A673 (cell line): ENCODE measurements at regions of chr2 and their contacts with region 1.

Region 1: DNA sequence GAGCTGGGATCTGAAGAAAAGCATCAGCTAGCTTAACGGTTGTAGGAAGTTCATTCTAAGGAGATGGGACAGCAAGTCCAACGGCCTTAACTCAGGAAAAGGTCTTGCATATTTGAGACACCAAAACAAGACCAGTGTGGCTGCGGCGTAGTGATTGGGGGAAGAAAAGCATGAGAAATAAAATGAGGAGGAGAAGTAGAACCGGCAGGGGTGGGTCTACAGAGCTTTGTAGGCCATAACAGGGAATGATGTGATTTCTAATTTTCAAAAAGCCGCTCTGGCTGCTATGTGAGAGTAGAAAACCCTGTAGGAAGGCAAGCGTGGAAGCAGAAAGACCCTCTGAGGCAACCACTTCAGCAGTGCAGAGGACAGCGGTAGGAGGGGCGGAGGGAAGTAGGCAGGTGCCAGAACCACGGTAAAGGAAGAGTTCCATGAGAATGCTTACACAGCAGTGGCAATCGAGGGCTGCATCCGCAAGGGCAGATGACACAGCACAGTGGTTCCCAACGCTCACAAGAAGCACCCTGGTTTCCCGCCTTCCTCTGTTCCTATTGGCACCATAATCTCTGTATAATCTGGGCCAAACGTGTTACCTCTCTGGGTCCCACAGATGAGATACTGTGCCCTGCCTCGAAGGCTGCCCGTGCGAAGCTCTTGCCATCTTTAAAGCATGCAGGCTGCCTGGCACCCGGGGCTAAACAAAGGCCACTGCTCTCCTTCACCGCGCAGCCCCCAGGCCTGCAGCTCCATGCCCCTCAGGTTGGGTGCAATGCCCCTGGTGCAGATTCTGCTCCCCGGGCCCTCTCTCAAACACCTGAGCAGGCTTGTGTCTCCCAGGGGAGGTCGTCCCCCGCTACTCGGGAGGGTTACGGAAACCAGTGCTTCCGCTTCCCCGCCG is 791 bp downstream of the ANKRD39 start:
- DNase-seq: peak; percentile 30
- H3K4me3 ChIP-seq: peak overlapping the region; percentile 66
- H3K27ac ChIP-seq: peak overlapping the region; percentile 78
- H3K4me1 ChIP-seq: peaks cover 10% of the 10 kb centered on the region
- H3K27me3 ChIP-seq: no peaks in the 10 kb centered on the region
- CTCF ChIP-seq: no peak

Region 2: DNA sequence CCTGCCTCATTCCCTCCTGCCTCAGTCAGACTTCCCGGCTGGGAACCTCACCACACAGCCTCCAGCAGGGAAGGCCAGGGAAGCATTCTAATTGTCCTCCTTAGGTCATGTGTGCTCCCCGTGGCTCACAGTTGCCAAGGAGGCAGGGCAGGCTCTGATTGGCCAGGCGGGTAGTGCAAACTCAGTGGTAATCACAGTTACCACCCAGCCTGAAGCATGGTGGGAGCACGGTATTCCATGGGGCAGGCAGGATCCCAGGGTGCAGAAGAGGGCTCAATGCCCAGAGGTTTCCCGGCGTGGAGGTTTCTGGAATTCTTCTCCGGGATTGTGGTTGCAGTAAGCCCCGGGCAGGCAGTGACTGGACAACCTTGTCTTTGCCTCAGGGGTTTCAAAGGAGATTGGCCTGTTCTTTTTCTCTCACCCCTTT is 187.3 kb before region 1 on chr2:
- CTCF ChIA-PET with region 1: interaction called, 18 read pairs
- POLR2A ChIA-PET with region 1: no interaction called
- intact Hi-C with region 1: no loop called
- DNase-seq: no peak
- H3K4me3 ChIP-seq: no peak overlapping the region
- H3K27ac ChIP-seq: no peak overlapping the region
- H3K4me1 ChIP-seq: peaks cover 19% of the 10 kb centered on the region
- H3K27me3 ChIP-seq: no peaks in the 10 kb centered on the region
- CTCF ChIP-seq: no peak

Region 3: GRCh38 chr2:96868555-96869280 is 11.7 kb after region 1 on chr2:
- CTCF ChIA-PET with region 1: interaction called, 24 read pairs
- POLR2A ChIA-PET with region 1: interaction called, 3 read pairs
- intact Hi-C with region 1: no loop called
- DNase-seq: peak; percentile 95
- H3K4me3 ChIP-seq: peak overlapping the region; percentile 97
- H3K27ac ChIP-seq: peak overlapping the region; percentile 99
- H3K4me1 ChIP-seq: peaks cover 19% of the 10 kb centered on the region
- H3K27me3 ChIP-seq: no peaks in the 10 kb centered on the region
- CTCF ChIP-seq: peak; percentile 64

Region 4: DNA sequence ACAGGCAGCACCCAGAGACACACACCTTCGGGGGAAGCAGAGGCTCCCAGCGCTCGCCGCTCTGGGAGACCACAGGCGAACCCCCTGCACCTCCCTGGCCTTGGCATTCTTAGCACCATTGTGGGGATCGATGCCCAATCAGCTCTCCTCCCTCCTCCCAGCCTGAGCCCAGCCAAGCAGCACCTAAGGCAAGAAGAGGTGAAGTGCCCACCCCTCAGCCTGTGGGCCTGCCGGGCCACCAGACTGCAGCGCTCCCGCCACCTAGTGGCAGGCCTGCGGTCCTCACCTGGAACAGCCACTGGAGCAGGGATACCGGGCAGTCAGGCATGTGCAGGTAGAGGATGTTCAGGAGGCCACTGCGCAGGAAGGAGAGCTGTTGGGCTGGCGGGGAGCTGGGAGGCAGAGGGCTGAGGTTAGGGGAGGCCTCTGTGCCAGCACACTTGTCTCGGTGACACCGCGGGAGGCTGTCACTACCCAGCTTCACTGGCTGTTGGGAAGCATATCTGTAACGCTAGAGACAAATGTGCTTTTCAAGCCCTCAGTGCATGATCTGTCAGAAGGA is 94.1 kb after region 1 on chr2:
- CTCF ChIA-PET with region 1: interaction called, 13 read pairs
- POLR2A ChIA-PET with region 1: no interaction called
- intact Hi-C with region 1: loop called (anchors 1 kb)
- DNase-seq: peak; percentile 69
- H3K4me3 ChIP-seq: no peak overlapping the region
- H3K27ac ChIP-seq: no peak overlapping the region
- H3K4me1 ChIP-seq: no peaks in the 10 kb centered on the region
- H3K27me3 ChIP-seq: no peaks in the 10 kb centered on the region
- CTCF ChIP-seq: peak; percentile 98

Region 5: GRCh38 chr2:97663965-97664635 is 807.1 kb after region 1 on chr2 and contains the start of gene ACTR1B:
- CTCF ChIA-PET with region 1: no interaction called
- POLR2A ChIA-PET with region 1: no interaction called
- intact Hi-C with region 1: no loop called
- DNase-seq: peak; percentile 99
- H3K4me3 ChIP-seq: peak within 1 kb of the TSS; percentile 78
- H3K27ac ChIP-seq: peak within 1 kb of the TSS; percentile 85
- H3K4me1 ChIP-seq: peaks cover 10% of the 10 kb centered on the region
- H3K27me3 ChIP-seq: no peaks in the 10 kb centered on the region
- CTCF ChIP-seq: peak; percentile 73
- total RNA-seq, gene ACTR1B: 36.3 and 41.7 TPM in 2 replicates